MCF 10A (cell line): ENCODE measurements at regions of chr5 and their contacts with region 1.

Region 1: GRCh38 chr5:10452768-10453331 is 11.2 kb downstream of the ROPN1L start:
- DNase-seq: peak; percentile 77
- H3K4me3 Mint-ChIP-seq: no peak overlapping the region
- H3K27ac Mint-ChIP-seq: peak overlapping the region; percentile 54
- H3K4me1 Mint-ChIP-seq: peaks cover 43% of the 10 kb centered on the region
- H3K27me3 Mint-ChIP-seq: no peaks in the 10 kb centered on the region
- CTCF ChIP-seq: peak; percentile 65

Region 2: GRCh38 chr5:10364186-10364683 is 88.6 kb before region 1 on chr5:
- CTCF ChIA-PET with region 1: no interaction called
- POLR2A ChIA-PET with region 1: no interaction called
- intact Hi-C with region 1: no loop called
- DNase-seq: peak; percentile 43
- H3K4me3 Mint-ChIP-seq: no peak overlapping the region
- H3K27ac Mint-ChIP-seq: no peak overlapping the region
- H3K4me1 Mint-ChIP-seq: peaks cover 37% of the 10 kb centered on the region
- H3K27me3 Mint-ChIP-seq: no peaks in the 10 kb centered on the region
- CTCF ChIP-seq: peak; percentile 9

Region 3: GRCh38 chr5:10479226-10479721 is 26.4 kb after region 1 on chr5:
- CTCF ChIA-PET with region 1: interaction called, 8 read pairs
- POLR2A ChIA-PET with region 1: interaction called, 18 read pairs
- intact Hi-C with region 1: no loop called
- DNase-seq: peak; percentile 88
- H3K4me3 Mint-ChIP-seq: peak overlapping the region; percentile 8
- H3K27ac Mint-ChIP-seq: peak overlapping the region; percentile 50
- H3K4me1 Mint-ChIP-seq: peaks cover 16% of the 10 kb centered on the region
- H3K27me3 Mint-ChIP-seq: no peaks in the 10 kb centered on the region
- CTCF ChIP-seq: no peak

Region 4: DNA sequence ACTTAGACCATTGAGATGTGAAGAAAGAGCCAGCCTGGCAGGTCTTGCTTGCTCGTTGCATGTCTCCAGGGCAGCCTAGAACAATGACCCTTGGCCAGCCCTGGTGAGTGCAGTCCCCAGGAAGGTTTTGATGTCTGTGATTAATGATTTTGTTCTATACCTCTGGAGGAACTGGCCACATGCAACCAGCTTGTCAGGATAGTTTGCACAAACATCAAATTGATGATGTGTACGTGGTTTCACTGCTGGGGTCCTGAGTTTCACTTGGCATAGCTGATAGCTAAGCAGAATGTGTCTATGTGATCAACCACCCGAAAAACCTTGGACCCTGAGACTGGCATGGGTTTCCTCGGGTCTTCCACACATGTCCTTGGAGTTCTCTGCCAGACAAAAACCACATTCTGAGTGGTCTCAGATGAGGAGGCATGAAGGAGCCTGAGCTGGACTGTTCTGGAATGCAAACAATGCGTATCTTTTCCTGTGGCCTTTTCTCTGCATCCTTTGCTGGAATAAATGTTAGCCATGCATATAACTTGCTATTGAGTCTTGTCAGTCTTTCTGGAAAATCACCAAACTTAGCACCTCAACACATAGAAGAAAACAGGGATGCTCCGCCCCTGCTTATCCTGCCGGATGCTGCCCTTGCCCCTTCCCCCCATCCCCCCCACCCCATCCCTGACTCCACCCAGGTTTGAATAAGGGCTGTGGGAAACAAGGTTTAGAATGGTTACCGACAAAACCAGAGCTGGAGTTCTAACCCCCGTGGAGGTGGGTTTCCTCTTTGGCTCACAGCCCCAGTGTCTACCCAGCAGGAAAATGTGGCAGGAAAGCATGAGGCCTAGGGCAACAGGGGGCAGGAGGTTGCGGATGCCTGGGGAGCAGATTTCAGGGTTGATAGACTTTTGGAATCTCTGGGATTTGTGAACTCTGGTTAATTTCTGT is 60.9 kb after region 1 on chr5:
- CTCF ChIA-PET with region 1: no interaction called
- POLR2A ChIA-PET with region 1: no interaction called
- intact Hi-C with region 1: no loop called
- DNase-seq: no peak
- H3K4me3 Mint-ChIP-seq: no peak overlapping the region
- H3K27ac Mint-ChIP-seq: no peak overlapping the region
- H3K4me1 Mint-ChIP-seq: peaks cover 6% of the 10 kb centered on the region
- H3K27me3 Mint-ChIP-seq: no peaks in the 10 kb centered on the region
- CTCF ChIP-seq: no peak

Region 5: GRCh38 chr5:10538789-10539686 is 86.2 kb after region 1 on chr5:
- CTCF ChIA-PET with region 1: no interaction called
- POLR2A ChIA-PET with region 1: no interaction called
- intact Hi-C with region 1: no loop called
- DNase-seq: no peak
- H3K4me3 Mint-ChIP-seq: no peak overlapping the region
- H3K27ac Mint-ChIP-seq: no peak overlapping the region
- H3K4me1 Mint-ChIP-seq: peaks cover 6% of the 10 kb centered on the region
- H3K27me3 Mint-ChIP-seq: no peaks in the 10 kb centered on the region
- CTCF ChIP-seq: no peak

Region 6: GRCh38 chr5:10552183-10553143 is 99.6 kb after region 1 on chr5:
- CTCF ChIA-PET with region 1: interaction called, 6 read pairs
- POLR2A ChIA-PET with region 1: interaction called, 3 read pairs
- intact Hi-C with region 1: loop called (anchors 10 kb)
- DNase-seq: peak; percentile 79
- H3K4me3 Mint-ChIP-seq: no peak overlapping the region
- H3K27ac Mint-ChIP-seq: peak overlapping the region; percentile 87
- H3K4me1 Mint-ChIP-seq: peaks cover 65% of the 10 kb centered on the region
- H3K27me3 Mint-ChIP-seq: no peaks in the 10 kb centered on the region
- CTCF ChIP-seq: no peak

Region 7: DNA sequence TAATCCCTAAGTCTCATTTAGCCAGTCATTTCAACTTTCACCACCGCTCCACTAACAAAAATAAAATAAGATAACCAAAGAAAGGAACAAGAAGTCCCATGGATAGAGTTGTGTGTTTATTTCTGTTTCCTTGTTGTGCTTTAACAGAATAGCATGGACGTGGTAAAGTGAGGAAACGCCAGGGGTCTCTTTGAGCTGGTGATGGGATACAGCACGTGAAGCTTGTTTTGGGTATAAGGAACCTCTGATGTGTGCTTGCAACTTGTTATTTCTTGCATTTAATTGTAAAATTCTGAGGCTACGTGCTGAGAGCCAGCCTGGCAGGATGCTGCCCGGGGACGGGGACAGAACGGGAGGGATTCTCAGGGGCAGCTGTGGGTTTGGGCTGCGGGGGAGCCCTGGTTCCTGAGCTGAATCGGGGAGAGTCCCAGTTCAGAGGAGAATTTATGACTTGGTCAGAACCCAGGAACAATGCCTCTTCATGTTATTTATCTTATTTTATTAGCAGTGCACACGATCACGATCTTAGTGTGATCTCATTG is 174.4 kb after region 1 on chr5:
- CTCF ChIA-PET with region 1: interaction called, 335 read pairs
- POLR2A ChIA-PET with region 1: interaction called, 52 read pairs
- intact Hi-C with region 1: loop called (anchors 1 kb)
- DNase-seq: no peak
- H3K4me3 Mint-ChIP-seq: peak overlapping the region; percentile 50
- H3K27ac Mint-ChIP-seq: peak overlapping the region; percentile 17
- H3K4me1 Mint-ChIP-seq: peaks cover 27% of the 10 kb centered on the region
- H3K27me3 Mint-ChIP-seq: no peaks in the 10 kb centered on the region
- CTCF ChIP-seq: no peak

Region 8: DNA sequence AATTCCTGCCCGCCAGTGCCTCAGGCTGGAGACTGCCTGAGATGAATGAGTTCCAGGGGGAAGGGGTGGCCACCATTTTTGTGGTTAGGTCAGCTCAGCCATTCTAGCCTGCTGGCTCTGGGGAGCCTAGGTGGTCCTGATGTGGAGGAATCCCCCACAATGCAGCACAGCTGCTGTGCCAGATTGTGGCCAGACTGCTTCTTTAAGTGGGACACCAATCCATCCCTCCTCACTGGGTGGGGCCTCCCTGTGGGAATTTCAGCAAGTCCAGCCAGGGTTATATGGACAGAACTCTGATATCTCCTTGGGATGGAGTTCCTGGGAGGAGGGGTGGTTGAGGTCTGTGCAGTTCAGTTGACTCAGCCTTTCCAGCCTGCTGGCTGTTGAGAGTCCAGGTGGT is 359.4 kb after region 1 on chr5:
- CTCF ChIA-PET with region 1: no interaction called
- POLR2A ChIA-PET with region 1: no interaction called
- intact Hi-C with region 1: no loop called
- DNase-seq: no peak
- H3K4me3 Mint-ChIP-seq: no peak overlapping the region
- H3K27ac Mint-ChIP-seq: no peak overlapping the region
- H3K4me1 Mint-ChIP-seq: no peaks in the 10 kb centered on the region
- H3K27me3 Mint-ChIP-seq: peaks cover 75% of the 10 kb centered on the region
- CTCF ChIP-seq: no peak

Region 9: GRCh38 chr5:11110128-11110527 is 657.3 kb after region 1 on chr5:
- CTCF ChIA-PET with region 1: no interaction called
- POLR2A ChIA-PET with region 1: no interaction called
- intact Hi-C with region 1: loop called (anchors 2 kb)
- DNase-seq: no peak
- H3K4me3 Mint-ChIP-seq: no peak overlapping the region
- H3K27ac Mint-ChIP-seq: no peak overlapping the region
- H3K4me1 Mint-ChIP-seq: no peaks in the 10 kb centered on the region
- H3K27me3 Mint-ChIP-seq: peaks cover 31% of the 10 kb centered on the region
- CTCF ChIP-seq: no peak

Region 10: GRCh38 chr5:11483630-11484029 is 1030.8 kb after region 1 on chr5:
- CTCF ChIA-PET with region 1: interaction called, 3 read pairs
- POLR2A ChIA-PET with region 1: no interaction called
- intact Hi-C with region 1: loop called (anchors 2 kb)
- DNase-seq: no peak
- H3K4me3 Mint-ChIP-seq: no peak overlapping the region
- H3K27ac Mint-ChIP-seq: no peak overlapping the region
- H3K4me1 Mint-ChIP-seq: no peaks in the 10 kb centered on the region
- H3K27me3 Mint-ChIP-seq: peaks cover 42% of the 10 kb centered on the region
- CTCF ChIP-seq: no peak